ENCODE measurements at regions of chr13 and their contacts with region 1.

Region 1: GRCh38 chr13:113562085-113562749 is 22.3 kb upstream of the TFDP1 start:
- DNase-seq: peak; percentile 73
- H3K4me3 ChIP-seq: no peak overlapping the region
- H3K27ac ChIP-seq: no peak overlapping the region
- H3K4me1 ChIP-seq: no peaks in the 10 kb centered on the region
- H3K27me3 ChIP-seq: no peaks in the 10 kb centered on the region
- CTCF ChIP-seq: peak; percentile 78 to 91
- POLR2A ChIP-seq: no peak

Region 2: DNA sequence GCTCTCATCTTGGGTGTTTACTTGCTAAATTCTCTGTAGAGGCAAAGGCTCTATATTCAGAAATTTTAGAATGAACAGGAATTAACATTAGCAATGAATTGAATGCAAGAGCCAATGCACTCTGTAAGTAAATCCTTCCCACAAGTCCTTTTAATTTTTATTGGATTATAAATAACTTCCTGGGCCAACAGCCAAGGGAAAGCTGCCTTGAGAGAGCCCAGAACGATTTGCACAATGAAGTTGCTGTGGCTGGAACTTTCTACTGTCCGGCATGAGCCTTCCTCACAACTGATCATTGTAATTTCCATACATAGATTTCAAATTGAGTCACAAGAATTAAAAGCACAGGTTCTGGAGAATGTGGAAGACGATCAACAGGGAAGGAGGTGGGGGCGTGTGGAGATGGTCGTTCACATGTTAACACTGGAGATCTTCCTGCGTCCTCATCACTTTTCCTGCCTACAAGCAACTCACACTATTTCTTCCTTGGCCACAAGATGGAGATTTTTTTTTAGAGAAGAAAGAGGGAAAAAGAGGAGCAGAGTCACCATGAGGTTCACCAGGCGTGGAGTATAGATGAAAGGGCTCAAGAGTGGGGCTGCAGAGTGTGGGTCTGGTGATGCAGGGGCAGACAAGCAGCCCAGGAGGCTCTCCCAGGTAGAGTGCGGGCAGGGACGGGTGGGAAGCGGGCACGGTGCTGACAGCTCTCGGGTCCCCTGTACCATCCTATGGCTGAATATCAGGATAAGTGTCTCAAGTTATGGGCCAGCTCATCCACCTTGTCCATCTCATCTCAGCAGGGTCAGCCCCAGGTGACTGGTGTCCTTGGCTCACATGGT is 1384.5 kb before region 1 on chr13:
- CTCF ChIA-PET with region 1: no interaction called
- POLR2A ChIA-PET with region 1: no interaction called
- dilution Hi-C with region 1: no loop called
- intact Hi-C with region 1: no loop called
- DNase-seq: no peak
- H3K4me3 ChIP-seq: no peak overlapping the region
- H3K27ac ChIP-seq: no peak overlapping the region
- H3K4me1 ChIP-seq: no peaks in the 10 kb centered on the region
- H3K27me3 ChIP-seq: no peaks in the 10 kb centered on the region
- CTCF ChIP-seq: no peak
- POLR2A ChIP-seq: no peak

Region 3: GRCh38 chr13:113009743-113010509 is 552.3 kb before region 1 on chr13:
- CTCF ChIA-PET with region 1: no interaction called
- POLR2A ChIA-PET with region 1: no interaction called
- dilution Hi-C with region 1: no loop called
- intact Hi-C with region 1: no loop called
- DNase-seq: no peak
- H3K4me3 ChIP-seq: no peak overlapping the region
- H3K27ac ChIP-seq: no peak overlapping the region
- H3K4me1 ChIP-seq: no peaks in the 10 kb centered on the region
- H3K27me3 ChIP-seq: no peaks in the 10 kb centered on the region
- CTCF ChIP-seq: no peak
- POLR2A ChIP-seq: no peak

Region 4: GRCh38 chr13:113162771-113163685 is 399.2 kb before region 1 on chr13:
- CTCF ChIA-PET with region 1: no interaction called
- POLR2A ChIA-PET with region 1: no interaction called
- dilution Hi-C with region 1: no loop called
- intact Hi-C with region 1: no loop called
- DNase-seq: no peak
- H3K4me3 ChIP-seq: no peak overlapping the region
- H3K27ac ChIP-seq: no peak overlapping the region
- H3K4me1 ChIP-seq: no peaks in the 10 kb centered on the region
- H3K27me3 ChIP-seq: peaks cover 0 to 2% of the 10 kb centered on the region in 2 experiments
- CTCF ChIP-seq: no peak
- POLR2A ChIP-seq: no peak

Region 5: GRCh38 chr13:113398963-113399661 is 163.1 kb before region 1 on chr13:
- CTCF ChIA-PET with region 1: interaction called, 7 read pairs
- POLR2A ChIA-PET with region 1: no interaction called
- dilution Hi-C with region 1: no loop called
- intact Hi-C with region 1: loop called (anchors 5 kb)
- DNase-seq: no peak
- H3K4me3 ChIP-seq: no peak overlapping the region
- H3K27ac ChIP-seq: no peak overlapping the region
- H3K4me1 ChIP-seq: no peaks in the 10 kb centered on the region
- H3K27me3 ChIP-seq: no peaks in the 10 kb centered on the region
- CTCF ChIP-seq: no peak
- POLR2A ChIP-seq: no peak

Region 6: DNA sequence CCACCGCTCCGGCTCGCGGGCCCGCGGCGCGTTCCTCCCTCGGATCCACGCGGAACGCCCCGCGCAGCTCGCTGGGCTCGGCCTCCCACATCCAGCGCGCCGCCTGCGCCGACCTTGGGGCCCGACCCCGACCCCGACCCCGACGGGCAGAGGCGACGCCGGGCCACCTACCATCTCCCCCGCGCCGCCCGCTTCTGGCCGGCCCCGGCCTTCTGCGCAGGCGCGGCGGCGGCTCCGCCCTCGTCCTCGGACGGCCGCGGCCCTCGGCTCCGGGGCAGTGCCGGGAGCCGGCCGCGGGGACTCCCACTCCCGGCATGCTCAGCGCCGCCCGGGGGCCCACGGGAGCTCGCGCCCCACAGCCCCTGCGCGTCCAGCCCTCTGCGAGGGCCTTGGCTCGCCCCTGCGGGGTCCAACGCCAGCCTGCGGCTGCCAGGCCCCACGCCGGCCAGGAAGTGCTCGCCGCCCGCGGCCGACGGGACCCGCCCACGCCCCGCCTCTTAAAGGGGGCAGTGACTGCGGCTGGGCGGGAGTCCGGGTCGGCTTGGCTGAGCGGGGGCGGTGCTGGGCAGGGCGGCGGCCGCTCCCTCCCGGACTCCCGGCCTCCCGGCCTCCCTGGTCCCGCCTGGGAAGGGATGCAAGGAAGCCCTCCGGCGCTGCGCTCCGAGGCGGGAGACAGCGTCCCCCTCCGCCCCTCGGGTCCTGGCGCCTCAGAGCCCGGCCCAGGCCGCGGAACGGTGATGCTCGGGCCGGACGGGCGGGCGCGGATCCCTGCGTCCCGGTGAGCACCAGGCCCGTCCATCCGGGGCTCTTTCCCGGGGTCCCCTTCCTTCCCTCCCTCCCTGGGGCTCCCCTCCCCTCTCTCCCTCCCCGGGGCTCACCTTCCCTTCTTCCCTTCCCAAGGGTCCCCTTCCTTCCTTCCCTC is 71.5 kb before region 1 on chr13 and contains the start of gene DCUN1D2:
- CTCF ChIA-PET with region 1: interaction called, 13 read pairs
- POLR2A ChIA-PET with region 1: no interaction called
- dilution Hi-C with region 1: no loop called
- intact Hi-C with region 1: loop called (anchors 1 kb)
- DNase-seq: peak; percentile 97
- H3K4me3 ChIP-seq: peak within 1 kb of the TSS; percentile 61 to 90 (median 78)
- H3K27ac ChIP-seq: peak within 1 kb of the TSS; percentile 63
- H3K4me1 ChIP-seq: peaks cover 46% of the 10 kb centered on the region
- H3K27me3 ChIP-seq: no peaks in the 10 kb centered on the region
- CTCF ChIP-seq: no peak
- POLR2A ChIP-seq: peak; percentile 66
- total RNA-seq, gene DCUN1D2: 19.4 and 24.9 TPM in 2 replicates

Region 7: DNA sequence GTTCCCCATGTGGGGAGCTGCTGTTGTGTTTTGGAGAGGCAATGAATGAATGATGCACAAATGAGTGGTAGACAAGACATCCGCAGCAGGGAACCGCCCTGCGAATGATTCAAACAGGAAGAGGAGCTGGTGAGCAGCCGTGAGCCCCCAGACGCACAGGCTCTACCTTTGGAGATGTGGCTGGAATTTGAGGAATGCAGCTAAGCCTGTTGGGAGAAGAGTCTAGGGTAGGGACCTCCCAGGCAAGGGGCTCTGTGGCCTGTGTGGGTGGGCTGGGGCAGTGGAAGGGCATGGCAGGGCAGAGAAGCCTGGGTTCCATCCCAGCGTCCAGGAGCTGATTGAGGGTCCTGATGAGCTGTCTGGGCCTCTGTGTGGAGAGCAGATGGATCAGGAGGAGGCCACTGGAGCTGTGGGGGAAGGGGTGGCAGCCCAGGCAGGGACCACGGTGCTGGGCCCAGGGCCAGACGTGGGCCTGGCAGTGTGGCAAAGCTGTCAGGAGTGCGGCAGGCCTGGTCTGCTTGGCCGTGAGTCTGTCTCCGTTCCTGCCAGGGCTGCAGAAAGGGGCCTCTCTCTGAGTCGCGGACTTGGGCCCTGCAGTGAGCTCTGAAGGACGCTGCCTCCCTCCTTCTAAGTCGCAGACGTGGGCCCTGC is 29.9 kb before region 1 on chr13:
- CTCF ChIA-PET with region 1: interaction called, 11 read pairs
- POLR2A ChIA-PET with region 1: no interaction called
- dilution Hi-C with region 1: no loop called
- intact Hi-C with region 1: no loop called
- DNase-seq: no peak
- H3K4me3 ChIP-seq: no peak overlapping the region
- H3K27ac ChIP-seq: no peak overlapping the region
- H3K4me1 ChIP-seq: no peaks in the 10 kb centered on the region
- H3K27me3 ChIP-seq: no peaks in the 10 kb centered on the region
- CTCF ChIP-seq: no peak
- POLR2A ChIP-seq: no peak

Region 8: DNA sequence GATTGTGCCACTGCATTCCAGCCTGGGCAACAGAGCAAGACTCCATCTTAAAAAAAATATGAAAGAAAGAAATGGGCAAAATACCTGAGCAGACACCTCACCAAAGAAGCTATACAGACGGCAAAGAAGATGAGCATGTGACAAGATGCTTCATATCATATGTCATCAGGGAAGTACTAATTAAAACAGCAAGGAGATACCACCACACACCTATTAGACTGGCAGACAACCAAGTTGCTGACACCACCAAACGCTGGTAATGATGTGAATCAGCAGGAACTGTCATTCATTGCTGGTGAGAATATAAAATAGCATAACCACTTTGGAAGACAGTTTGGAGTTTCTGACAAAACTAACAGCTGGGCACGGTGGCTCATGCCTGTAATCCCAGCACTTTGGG is 10.8 kb after region 1 on chr13:
- CTCF ChIA-PET with region 1: interaction called, 14 read pairs
- POLR2A ChIA-PET with region 1: no interaction called
- dilution Hi-C with region 1: no loop called
- intact Hi-C with region 1: no loop called
- DNase-seq: no peak
- H3K4me3 ChIP-seq: no peak overlapping the region
- H3K27ac ChIP-seq: no peak overlapping the region
- H3K4me1 ChIP-seq: no peaks in the 10 kb centered on the region
- H3K27me3 ChIP-seq: peaks cover 7 to 31% of the 10 kb centered on the region in 2 experiments
- CTCF ChIP-seq: no peak
- POLR2A ChIP-seq: no peak

Measured in endothelial cell of umbilical vein (primary cell).